Sigmoid colon (tissue), 7 donors: ENCODE measurements at regions of chr11 and their contacts with region 1.

Region 1: GRCh38 chr11:47355283-47356128 is 3.0 kb upstream of the MYBPC3 start:
- DNase-seq: peak; percentile 97
- H3K4me3 ChIP-seq: peak overlapping the region; percentile 38 to 64 (median 58)
- H3K27ac ChIP-seq: peak overlapping the region; percentile 73 to 82 (median 80)
- H3K4me1 ChIP-seq: peaks cover 0 to 14% (median 12%) of the 10 kb centered on the region in 4 donors
- H3K27me3 ChIP-seq: no peaks in the 10 kb centered on the region
- CTCF ChIP-seq: peak; percentile 94 to 99 (median 96)
- EP300 ChIP-seq: no peak
- POLR2A ChIP-seq: no peak

Region 2: GRCh38 chr11:46889689-46890475 is 465.6 kb before region 1 on chr11:
- intact Hi-C with region 1: loop called (anchors 10 kb)
- DNase-seq: peak; percentile 81
- H3K4me3 ChIP-seq: no peak overlapping the region
- H3K27ac ChIP-seq: no peak overlapping the region
- H3K4me1 ChIP-seq: no peaks in the 10 kb centered on the region
- H3K27me3 ChIP-seq: no peaks in the 10 kb centered on the region
- CTCF ChIP-seq: peak; percentile 85 to 94 (median 90)
- EP300 ChIP-seq: no peak
- POLR2A ChIP-seq: no peak

Region 3: DNA sequence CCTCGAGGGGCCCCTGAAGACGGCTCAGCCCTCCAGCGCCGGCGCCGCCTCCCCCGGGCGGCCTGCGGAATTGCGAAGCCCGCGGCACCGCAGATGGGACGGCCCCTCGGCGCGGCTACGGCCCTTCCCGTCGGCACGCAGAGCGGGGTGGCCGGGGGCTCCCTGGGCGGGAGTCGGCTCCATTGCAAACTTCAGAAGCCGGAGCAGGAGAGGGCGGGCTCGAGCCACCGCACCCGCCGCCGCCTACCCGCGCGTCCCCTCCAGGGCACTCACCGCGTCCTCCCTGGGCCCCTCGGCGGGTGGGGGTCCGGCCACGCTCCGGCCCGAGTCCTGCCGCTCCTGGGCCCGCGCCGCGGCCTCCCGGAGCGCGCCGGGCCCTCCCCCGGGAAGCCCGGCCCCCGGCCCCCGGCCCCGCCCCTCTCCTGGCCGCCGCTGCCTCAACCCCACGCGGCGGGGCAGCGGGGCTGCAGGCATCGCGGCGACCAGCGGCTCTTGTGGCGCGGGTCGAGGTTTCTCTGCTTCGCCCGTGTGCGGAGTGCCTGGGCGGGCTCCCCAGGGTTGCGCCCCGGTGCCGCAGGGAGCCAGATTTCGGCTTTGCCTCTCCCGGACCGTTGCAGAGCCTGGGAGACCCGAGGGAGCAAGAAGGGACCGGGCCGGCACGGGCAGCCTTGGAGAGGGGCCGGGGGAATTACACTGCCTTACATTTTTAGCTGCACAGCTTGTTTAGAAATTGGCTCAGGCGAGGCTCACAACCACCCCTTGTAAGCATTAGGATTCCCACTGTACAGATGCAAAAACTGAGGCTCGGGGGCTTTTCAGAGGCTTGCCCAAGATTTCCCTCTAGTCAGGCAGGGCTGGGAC is 169.2 kb before region 1 on chr11 and contains the start of gene PACSIN3:
- intact Hi-C with region 1: loop called (anchors 2 kb)
- DNase-seq: peak; percentile 82
- H3K4me3 ChIP-seq: peak within 1 kb of the TSS; percentile 62 to 95 (median 75)
- H3K27ac ChIP-seq: peak within 1 kb of the TSS; percentile 88 to 99 (median 95)
- H3K4me1 ChIP-seq: peaks cover 0 to 72% (median 65%) of the 10 kb centered on the region in 4 donors
- H3K27me3 ChIP-seq: no peaks in the 10 kb centered on the region
- CTCF ChIP-seq: peak in 2 of 4 experiments; percentile 33 to 38
- EP300 ChIP-seq: no peak
- POLR2A ChIP-seq: peak in 1 of 2 donors; percentile 20
- total RNA-seq, gene PACSIN3: 56.0 to 78.3 (median 73.5) TPM

Region 4: GRCh38 chr11:47259178-47259977 is 96.1 kb before region 1 on chr11:
- intact Hi-C with region 1: loop called (anchors 5 kb)
- DNase-seq: no peak
- H3K4me3 ChIP-seq: no peak overlapping the region
- H3K27ac ChIP-seq: peak overlapping the region in 3 of 4 donors; percentile 63 to 79 (median 69)
- H3K4me1 ChIP-seq: peaks cover 0 to 54% (median 38%) of the 10 kb centered on the region in 4 donors
- H3K27me3 ChIP-seq: no peaks in the 10 kb centered on the region
- CTCF ChIP-seq: peak in 3 of 4 experiments; percentile 29 to 54 (median 37)
- EP300 ChIP-seq: no peak
- POLR2A ChIP-seq: no peak

Region 5: DNA sequence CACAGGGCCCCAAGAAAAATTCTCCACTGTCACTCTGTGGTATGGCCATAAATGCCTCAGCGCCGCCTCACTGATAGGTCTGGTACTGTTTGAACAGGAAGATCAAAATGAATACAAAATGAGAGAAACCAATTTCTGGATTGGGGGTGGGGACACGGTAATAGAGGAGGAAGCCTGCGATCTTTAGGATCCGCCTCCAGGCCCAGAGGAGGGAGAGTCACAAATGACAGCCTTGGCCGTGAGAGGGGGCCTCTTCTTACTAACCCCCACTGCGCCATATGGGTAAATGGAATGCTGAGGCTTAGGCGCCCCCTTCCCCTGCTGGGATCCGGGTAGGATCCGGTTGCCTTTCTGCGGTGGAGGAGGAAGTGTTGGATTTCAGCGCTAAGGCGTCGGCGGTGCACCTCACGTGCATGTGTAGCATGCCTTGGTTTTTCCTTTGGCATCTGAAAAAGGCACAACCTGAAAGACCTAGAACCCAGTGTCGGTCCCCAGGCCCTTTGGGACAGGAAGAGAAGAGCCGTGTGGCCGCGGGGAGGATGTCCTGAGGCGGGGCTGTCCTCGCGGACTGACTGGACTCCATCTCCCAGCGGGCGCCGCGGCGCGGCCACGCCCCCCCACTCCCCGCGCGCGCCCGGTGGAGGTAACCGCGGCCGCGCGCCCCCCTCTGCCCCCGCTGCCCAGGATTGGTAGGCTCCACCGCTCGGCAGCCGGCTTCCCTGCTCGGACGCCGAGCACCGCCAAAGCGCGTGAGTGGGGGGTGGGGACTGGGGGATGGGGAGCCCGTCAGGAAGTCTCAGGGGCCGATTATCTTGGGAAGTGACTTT is 86.3 kb before region 1 on chr11:
- intact Hi-C with region 1: loop called (anchors 5 kb)
- DNase-seq: peak; percentile 97
- H3K4me3 ChIP-seq: peak overlapping the region; percentile 77 to 94 (median 92)
- H3K27ac ChIP-seq: peak overlapping the region; percentile 95 to 98 (median 96)
- H3K4me1 ChIP-seq: peaks cover 0 to 40% (median 38%) of the 10 kb centered on the region in 4 donors
- H3K27me3 ChIP-seq: no peaks in the 10 kb centered on the region
- CTCF ChIP-seq: peak in 1 of 4 experiments; percentile 12
- EP300 ChIP-seq: no peak
- POLR2A ChIP-seq: peak in 1 of 2 donors; percentile 41